ENCODE measurements at regions of chr4 and their contacts with region 1.

Region 1: GRCh38 chr4:18454349-18454748 is 432.8 kb upstream of the LCORL start:
- DNase-seq: no peak
- ATAC-seq: no peak
- H3K4me3 ChIP-seq: no peak overlapping the region
- H3K27ac ChIP-seq: no peak overlapping the region
- H3K4me1 ChIP-seq: no peaks in the 10 kb centered on the region
- H3K27me3 ChIP-seq: no peaks in the 10 kb centered on the region
- CTCF ChIP-seq: no peak

Region 2: GRCh38 chr4:18180892-18181291 is 273.5 kb before region 1 on chr4:
- CTCF ChIA-PET with region 1: no interaction called
- POLR2A ChIA-PET with region 1: no interaction called
- in situ Hi-C with region 1: no loop called
- intact Hi-C with region 1: loop called (anchors 10 kb)
- DNase-seq: no peak
- ATAC-seq: no peak
- H3K4me3 ChIP-seq: no peak overlapping the region
- H3K27ac ChIP-seq: no peak overlapping the region
- H3K4me1 ChIP-seq: no peaks in the 10 kb centered on the region
- H3K27me3 ChIP-seq: no peaks in the 10 kb centered on the region
- CTCF ChIP-seq: no peak

Region 3: GRCh38 chr4:18435781-18436180 is 18.6 kb before region 1 on chr4:
- CTCF ChIA-PET with region 1: no interaction called
- POLR2A ChIA-PET with region 1: no interaction called
- in situ Hi-C with region 1: no loop called
- intact Hi-C with region 1: no loop called
- DNase-seq: no peak
- ATAC-seq: no peak
- H3K4me3 ChIP-seq: no peak overlapping the region
- H3K27ac ChIP-seq: no peak overlapping the region
- H3K4me1 ChIP-seq: no peaks in the 10 kb centered on the region
- H3K27me3 ChIP-seq: no peaks in the 10 kb centered on the region
- CTCF ChIP-seq: no peak

Measured in Panc1 (cell line).